Activated CD4-positive, alpha-beta T cell treated with anti-CD3 and anti-CD28 coated beads, Interleukin-2, amount 10 ng/mL, durations not matched to agents 7 days and 5 days (primary cell): ENCODE measurements at regions of chr19 and their contacts with region 1.

Region 1: DNA sequence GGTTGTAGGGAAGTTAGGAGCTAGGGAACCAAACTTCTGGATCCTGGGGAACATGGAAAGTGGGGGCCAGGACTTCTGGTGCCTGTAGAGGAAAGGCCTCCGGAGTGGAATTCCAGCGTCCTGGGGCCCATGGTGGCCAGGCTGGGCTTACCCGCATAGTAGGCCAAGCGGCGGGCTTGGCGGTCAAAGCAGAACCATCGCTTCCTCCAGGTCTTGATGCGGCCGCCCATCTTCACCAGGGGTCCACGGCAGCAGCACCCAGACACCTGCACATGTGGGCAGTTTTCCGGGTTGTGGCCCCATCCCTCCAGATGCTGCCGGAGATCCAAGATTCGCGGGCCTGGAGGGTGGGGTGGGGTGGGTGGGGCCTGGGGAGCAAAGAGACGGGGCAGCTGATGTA is 13.8 kb upstream of the LYPD3 start:
- DNase-seq: no peak
- H3K4me3 Mint-ChIP-seq: no peak overlapping the region
- H3K27ac Mint-ChIP-seq: no peak overlapping the region
- H3K4me1 Mint-ChIP-seq: peaks cover 12% of the 10 kb centered on the region
- H3K27me3 Mint-ChIP-seq: no peaks in the 10 kb centered on the region

Region 2: GRCh38 chr19:43463381-43464136 is 15.7 kb before region 1 on chr19:
- CTCF ChIA-PET with region 1: interaction called, 12 read pairs
- POLR2A ChIA-PET with region 1: no interaction called
- DNase-seq: peak; percentile 99
- H3K4me3 Mint-ChIP-seq: peak overlapping the region; percentile 90
- H3K27ac Mint-ChIP-seq: peak overlapping the region; percentile 98
- H3K4me1 Mint-ChIP-seq: peaks cover 39% of the 10 kb centered on the region
- H3K27me3 Mint-ChIP-seq: no peaks in the 10 kb centered on the region